ENCODE measurements at regions of chr12 and their contacts with region 1.

Region 1: DNA sequence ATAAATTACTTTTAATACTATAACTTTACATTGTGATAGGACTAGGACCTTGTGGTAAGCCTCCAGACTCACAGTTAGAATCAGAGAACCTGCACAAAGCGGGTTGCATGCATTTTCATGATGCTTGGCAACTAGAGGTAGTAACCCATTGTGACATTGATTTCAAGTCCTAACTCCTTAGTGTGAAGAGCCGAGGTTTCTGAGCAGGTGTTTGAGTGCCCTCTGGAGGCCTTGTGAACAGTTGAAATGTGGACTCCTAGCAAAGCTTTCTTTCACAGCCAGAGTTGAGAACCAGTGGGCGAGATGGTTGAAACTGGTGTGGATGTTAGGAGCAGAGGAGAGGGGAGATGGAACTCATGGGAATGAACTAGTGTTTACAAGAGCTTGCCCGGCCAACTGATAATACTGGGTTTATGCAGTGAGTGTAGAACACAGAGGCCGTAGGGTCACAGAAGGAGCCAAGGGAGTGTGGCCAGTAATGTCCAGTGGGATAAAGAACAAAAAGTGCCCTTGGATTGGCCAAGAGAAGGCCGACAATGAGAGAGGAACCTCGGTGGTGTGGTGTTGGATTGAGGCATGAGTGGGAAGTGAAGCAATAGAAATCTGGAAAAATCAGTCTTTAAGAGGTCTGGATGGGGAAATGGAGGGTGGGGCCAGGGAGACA is 10.9 kb downstream of the ZNF664 start:
- DNase-seq: no peak
- ATAC-seq: peak; percentile 72

Region 2: DNA sequence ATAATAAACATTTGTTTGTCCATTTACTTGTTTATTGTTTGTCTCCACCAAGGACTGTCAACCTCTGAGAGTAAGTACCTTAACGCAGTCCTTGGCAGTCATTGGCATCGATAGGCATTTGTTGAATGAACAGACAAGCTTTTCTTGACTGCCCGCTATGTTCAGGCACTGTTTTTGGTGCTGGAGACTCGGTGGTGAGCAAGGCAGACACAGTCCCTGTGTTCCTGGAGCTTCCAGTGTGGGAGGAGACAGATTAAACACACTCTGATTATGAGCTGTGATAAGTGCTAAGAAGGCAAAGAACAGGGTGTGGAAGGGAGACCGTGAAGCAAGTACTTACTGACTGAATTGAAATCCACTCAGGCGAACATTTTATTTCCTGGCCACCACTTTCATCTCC is 270.6 kb before region 1 on chr12:
- intact Hi-C with region 1: loop called (anchors 5 kb)
- DNase-seq: no peak
- ATAC-seq: no peak

Region 3: DNA sequence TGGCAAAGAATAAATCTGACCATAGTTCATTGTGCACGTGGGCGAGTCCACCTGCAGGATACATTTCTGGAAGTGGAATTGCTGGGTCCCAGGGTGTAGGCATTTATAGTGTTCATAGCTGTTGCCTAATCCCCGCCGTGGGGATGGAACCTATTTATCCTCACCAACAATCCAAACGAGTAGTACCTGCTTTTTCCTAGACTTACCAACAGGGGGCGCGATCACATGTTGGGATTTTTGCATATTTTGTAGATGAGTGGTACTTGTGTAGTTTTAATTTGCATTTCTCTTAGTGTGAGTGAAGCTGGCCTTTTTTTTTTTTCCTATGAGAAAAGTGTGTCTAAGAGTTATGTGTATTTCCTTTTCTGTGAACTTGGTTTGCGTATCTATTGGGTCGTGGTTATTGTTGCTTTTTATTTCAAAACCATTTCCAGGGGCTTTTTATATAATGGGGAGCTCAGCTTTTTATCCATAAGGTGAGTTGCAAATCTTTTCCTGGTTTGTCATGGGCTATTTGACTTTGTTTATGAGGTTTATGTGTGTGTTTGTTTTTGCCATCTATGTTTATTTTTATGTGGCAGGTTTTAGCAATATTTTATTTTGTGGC is 78.5 kb before region 1 on chr12:
- intact Hi-C with region 1: loop called (anchors 2 kb)
- DNase-seq: no peak
- ATAC-seq: no peak

Region 4: GRCh38 chr12:124006085-124006845 is 22.3 kb after region 1 on chr12:
- intact Hi-C with region 1: no loop called
- DNase-seq: no peak
- ATAC-seq: no peak

Region 5: DNA sequence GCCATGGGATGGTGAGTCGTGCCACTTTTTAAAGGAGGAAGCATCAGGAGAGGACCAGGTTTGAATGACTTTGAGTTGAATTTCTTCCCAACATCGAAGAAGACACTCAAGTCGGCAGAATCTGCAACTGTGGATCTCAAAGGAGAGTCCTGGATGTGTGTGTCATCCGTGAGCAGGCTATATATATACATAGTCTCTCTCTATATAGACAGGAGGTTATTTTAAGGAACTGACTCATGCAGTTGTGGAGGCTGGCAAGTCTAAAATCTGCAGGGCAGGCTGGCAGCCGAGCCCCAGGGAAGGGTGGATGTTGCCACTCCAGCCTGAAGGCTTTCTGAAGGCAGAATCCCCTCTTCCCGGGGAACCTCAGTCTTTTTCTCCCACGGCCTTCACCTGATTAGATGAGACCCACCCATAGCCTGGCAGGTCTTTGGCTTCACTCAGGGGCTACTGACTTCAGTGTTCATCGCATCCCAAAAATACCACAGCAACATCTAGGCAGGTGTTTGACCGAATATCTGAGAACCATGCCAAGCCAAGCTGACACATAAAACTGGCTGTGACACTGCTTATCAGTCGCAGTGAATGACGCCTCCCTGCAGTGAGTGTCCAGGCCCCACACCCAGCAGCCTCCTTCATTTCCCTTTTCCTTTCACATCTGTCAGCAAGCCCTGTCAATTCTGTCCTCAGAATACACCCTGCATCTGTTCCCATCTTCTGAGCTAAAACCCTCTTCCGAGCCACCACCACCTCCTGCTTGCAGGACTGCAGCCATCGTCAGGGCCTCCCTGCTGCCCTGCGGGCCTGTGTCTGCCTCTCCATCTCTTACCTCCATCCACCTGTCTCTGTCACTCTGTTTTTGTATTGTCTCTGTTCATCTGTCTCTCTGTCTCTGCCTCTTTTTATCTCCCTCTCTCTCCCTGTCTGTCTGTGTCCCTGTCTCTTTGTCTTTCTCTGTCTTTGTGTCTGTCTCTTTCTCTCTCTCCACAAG is 43.1 kb after region 1 on chr12:
- intact Hi-C with region 1: loop called (anchors 5 kb)
- DNase-seq: no peak
- ATAC-seq: peak; percentile 62

Region 6: DNA sequence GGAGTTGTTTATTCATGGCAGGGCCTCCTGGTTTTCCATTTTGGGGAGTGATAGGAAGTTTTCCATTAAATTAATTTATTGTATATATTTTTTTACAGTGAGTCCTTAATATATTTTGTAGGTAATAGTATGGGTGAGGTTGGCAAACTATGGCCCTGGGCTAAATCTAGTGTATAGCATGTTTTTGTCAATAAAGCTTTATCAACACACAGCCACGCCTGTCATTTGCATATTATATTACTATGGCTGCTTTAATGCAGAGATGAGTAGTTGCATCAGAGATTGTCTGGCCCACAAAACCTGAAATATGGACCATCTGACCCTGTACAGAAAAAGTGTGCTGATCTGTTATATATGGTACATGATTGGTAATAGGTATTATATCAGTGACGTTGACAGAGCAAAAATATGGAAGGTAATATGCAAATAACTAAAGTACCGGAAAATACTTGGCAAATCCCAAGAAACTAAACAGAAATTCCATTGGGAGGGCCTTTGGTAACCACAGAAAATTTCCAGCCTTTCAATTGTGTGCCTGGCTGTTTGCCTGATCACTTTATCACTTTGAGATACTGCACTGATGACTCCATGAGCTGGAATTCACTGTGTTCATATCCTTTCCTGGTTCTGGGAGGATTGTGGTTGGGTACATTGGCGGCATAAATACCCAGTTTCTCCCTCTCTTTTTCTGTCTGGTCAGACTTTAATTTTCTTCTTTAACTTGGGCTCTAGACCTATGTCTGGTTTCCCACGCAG is 249.3 kb after region 1 on chr12:
- intact Hi-C with region 1: no loop called
- DNase-seq: no peak
- ATAC-seq: no peak

Measured in Right ventricle myocardium inferior (tissue), 1 donor.